Mammary epithelial cell (primary cell): ENCODE measurements at regions of chrX and their contacts with region 1.

Region 1: GRCh38 chrX:20007962-20008622 is 17.2 kb upstream of the BCLAF3 start:
- DNase-seq: no peak
- H3K4me3 ChIP-seq: no peak overlapping the region
- H3K27ac ChIP-seq: no peak overlapping the region
- H3K4me1 ChIP-seq: no peaks in the 10 kb centered on the region
- H3K27me3 ChIP-seq: no peaks in the 10 kb centered on the region
- CTCF ChIP-seq: no peak

Region 2: DNA sequence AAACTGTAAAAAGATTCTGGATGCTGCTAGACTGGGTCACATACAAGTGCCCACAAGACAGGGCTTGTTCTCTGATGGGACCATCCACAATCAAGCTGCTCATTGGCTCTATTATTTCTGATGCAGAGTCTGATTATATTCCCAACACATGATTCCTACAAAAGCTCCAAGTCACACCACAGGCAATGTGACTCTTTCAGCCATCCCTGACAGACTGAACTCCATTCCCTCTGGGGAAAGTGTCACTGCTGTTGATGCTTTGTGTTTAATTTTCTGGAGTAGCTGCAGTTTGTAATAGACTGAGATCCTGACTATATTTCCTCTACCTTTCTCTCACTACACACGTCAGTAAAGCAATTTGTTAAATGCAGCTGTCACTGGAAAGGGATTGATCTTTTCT is 38.1 kb after region 1 on chrX:
- CTCF ChIA-PET with region 1: no interaction called
- dilution Hi-C with region 1: no loop called
- in situ Hi-C with region 1: no loop called
- intact Hi-C with region 1: no loop called
- DNase-seq: no peak
- H3K4me3 ChIP-seq: no peak overlapping the region
- H3K27ac ChIP-seq: no peak overlapping the region
- H3K4me1 ChIP-seq: peaks cover 7% of the 10 kb centered on the region
- H3K27me3 ChIP-seq: no peaks in the 10 kb centered on the region
- CTCF ChIP-seq: no peak

Region 3: DNA sequence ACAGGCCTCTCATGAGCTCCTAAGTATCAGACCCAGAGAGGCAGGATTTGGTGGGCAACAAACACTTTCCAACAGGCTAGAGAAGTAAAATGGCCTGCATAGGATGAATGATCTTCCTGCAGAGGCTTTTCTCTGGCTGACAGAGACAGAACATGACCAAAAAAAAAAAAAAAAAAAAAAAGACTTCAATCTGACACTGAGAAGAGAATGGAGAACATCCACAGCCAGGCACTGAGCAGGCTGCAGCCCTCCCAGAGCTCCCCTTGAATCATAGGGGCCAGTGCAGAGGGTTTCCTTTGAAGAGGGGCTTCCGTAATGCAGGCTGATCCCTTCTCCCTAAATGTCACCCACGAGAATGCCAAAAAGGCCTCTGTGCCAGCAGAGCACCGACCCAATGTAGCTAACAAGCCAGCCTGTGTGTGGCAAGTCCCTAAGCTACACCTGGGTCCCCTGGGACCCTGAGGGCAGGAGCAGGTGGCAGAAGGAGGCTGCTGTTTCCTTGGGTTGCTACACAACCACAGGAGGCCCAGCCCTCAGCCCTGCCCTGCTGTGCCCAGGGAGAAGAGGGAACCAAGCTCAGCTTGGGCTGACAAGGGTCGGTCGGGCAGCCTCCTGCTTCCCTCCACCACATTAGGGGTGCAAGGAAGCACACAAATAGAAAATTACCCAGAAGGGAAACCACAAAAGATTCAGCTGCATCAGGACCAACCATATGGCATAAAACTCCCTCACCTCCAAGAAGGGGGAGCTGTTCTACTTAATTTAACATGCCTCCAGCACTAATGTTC is 53.1 kb after region 1 on chrX:
- CTCF ChIA-PET with region 1: no interaction called
- dilution Hi-C with region 1: loop called (anchors 5 kb)
- in situ Hi-C with region 1: no loop called
- intact Hi-C with region 1: no loop called
- DNase-seq: no peak
- H3K4me3 ChIP-seq: no peak overlapping the region
- H3K27ac ChIP-seq: no peak overlapping the region
- H3K4me1 ChIP-seq: peaks cover 15% of the 10 kb centered on the region
- H3K27me3 ChIP-seq: no peaks in the 10 kb centered on the region
- CTCF ChIP-seq: no peak